Sciatic nerve (tissue), 2 donors: ENCODE measurements at regions of chr5 and their contacts with region 1.

Region 1: GRCh38 chr5:52378237-52378636 is 409.5 kb upstream of the ITGA1 start:
- DNase-seq: no peak
- ATAC-seq: no peak

Region 2: GRCh38 chr5:52015760-52016159 is 362.5 kb before region 1 on chr5:
- intact Hi-C with region 1: no loop called
- DNase-seq: no peak
- ATAC-seq: no peak

Region 3: DNA sequence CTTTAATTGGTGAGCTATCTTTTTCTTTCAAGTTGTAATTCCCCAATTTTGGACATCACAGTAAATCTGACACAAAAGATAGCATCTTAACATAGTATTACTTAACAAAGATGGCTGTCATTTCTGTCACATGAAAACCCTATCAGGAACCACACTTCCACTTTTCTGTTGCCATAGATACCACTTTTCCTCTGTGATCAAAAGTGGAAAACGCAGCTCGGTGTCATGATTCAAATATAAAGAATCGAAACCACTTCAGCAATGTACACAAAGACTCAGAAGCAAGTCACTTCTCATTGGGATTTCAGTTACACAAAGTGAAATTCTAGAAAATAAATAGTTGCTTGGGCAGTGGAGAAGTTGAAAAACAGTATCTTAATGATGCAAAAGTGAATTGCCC is 115.4 kb before region 1 on chr5:
- intact Hi-C with region 1: no loop called
- DNase-seq: no peak
- ATAC-seq: no peak

Region 4: GRCh38 chr5:52342361-52342760 is 35.9 kb before region 1 on chr5:
- intact Hi-C with region 1: no loop called
- DNase-seq: no peak
- ATAC-seq: no peak

Region 5: GRCh38 chr5:52441768-52442167 is 63.5 kb after region 1 on chr5:
- intact Hi-C with region 1: loop called (anchors 2 kb)
- DNase-seq: no peak
- ATAC-seq: no peak